Activated CD4-positive, alpha-beta T cell treated with anti-CD3 and anti-CD28 coated beads, Interleukin-2, amount 10 ng/mL, durations not matched to agents 24 days and 14 days (primary cell): ENCODE measurements at regions of chr15 and their contacts with region 1.

Region 1: GRCh38 chr15:52997123-52997522 is 207.0 kb upstream of the ONECUT1 start:
- DNase-seq: no peak
- H3K4me3 Mint-ChIP-seq: no peak overlapping the region
- H3K27ac Mint-ChIP-seq: no peak overlapping the region
- H3K4me1 Mint-ChIP-seq: no peaks in the 10 kb centered on the region
- H3K27me3 Mint-ChIP-seq: no peaks in the 10 kb centered on the region

Region 2: DNA sequence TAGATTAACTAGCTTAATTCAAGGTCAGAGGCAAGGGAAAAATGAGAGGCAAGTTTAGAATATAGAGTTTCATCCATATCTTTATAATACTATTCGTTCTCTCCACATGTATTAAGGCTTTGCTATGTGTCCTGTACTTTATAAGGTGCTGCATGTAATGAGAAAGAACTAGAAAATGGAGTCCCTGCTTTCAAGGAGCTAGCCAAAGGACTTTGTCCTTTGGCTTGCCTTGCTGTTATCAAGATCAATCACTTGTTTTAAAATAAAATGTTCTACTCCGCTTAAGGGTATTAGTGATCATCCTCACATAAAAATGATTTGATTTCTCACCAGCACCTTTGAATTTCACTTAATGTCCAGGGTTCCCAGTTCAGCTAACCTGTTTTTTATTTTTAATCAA is 291.4 kb after region 1 on chr15:
- intact Hi-C with region 1: loop called (anchors 5 kb)
- DNase-seq: no peak
- H3K4me3 Mint-ChIP-seq: no peak overlapping the region
- H3K27ac Mint-ChIP-seq: no peak overlapping the region
- H3K4me1 Mint-ChIP-seq: no peaks in the 10 kb centered on the region
- H3K27me3 Mint-ChIP-seq: no peaks in the 10 kb centered on the region